ENCODE measurements at regions of chrX and their contacts with region 1.

Region 1: DNA sequence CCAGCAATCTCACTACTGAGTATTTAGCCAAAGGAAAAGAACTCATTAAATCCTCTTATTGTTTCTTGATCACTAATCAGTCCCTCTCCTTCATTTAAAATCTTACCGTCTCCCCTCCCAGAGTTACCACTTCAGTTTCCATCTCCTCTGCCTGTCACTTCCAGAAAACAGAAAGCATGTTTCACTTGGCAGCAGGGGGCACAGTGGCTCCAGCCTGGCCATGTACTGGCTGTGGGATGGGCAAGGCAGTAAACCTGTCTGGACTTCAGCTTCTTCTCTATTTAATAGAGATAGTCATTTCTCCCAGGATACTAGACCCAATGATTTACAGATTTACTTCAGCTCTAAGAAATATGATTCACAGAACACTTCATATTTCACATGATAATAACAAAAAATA is 63.2 kb downstream of the CD40LG start:
- DNase-seq: peak; percentile 56
- H3K4me3 Mint-ChIP-seq: no peak overlapping the region
- H3K27ac Mint-ChIP-seq: no peak overlapping the region
- H3K4me1 Mint-ChIP-seq: no peaks in the 10 kb centered on the region
- H3K27me3 Mint-ChIP-seq: peaks cover 14% of the 10 kb centered on the region
- CTCF ChIP-seq: peak; percentile 36

Region 2: DNA sequence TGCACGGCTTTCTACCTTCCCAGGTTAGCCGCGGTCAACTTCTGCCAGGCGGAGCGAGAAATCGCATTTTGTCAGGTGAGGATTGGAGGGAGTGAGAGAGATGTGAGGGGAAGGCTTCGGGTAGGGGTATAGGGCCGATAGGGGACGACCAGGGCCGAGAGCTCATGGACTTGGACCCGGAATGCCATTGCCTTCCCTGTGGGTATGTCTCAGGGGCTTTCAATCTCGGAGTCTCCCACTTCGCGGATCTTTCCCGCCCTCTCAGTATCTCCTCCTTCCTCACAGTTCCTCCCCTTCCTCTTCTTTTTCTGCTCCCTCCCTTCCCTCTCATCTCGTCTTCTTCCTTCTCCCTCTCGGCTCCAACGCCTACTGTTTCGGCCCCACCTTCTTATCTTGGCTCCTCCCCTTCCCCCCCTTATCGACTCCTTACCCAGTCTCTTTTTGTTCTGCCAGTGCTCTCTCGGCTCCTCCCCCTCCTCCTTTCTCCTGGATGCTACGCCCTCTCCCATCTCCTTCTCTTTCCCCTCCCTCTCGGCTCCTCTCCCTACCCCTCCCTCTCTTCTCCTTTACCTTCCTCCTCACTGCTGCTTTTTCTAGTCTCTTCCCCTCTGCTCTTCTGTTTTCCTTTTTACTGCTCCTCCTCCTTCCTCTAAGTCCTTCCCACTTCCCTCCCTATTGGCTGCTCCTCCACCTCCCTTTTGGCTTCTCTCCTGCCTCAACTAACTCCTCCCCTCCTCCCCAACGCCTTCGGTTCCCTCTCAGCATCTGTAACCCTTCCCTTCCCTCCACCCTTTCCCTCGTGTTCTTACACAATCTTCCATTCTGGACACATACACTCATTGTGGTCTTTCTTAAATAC is 198.8 kb after region 1 on chrX:
- CTCF ChIA-PET with region 1: interaction called, 12 read pairs
- POLR2A ChIA-PET with region 1: interaction called, 3 read pairs
- intact Hi-C with region 1: no loop called
- DNase-seq: peak; percentile 93
- H3K4me3 Mint-ChIP-seq: peak overlapping the region; percentile 87
- H3K27ac Mint-ChIP-seq: peak overlapping the region; percentile 65
- H3K4me1 Mint-ChIP-seq: peaks cover 6% of the 10 kb centered on the region
- H3K27me3 Mint-ChIP-seq: no peaks in the 10 kb centered on the region
- CTCF ChIP-seq: no peak

Region 3: DNA sequence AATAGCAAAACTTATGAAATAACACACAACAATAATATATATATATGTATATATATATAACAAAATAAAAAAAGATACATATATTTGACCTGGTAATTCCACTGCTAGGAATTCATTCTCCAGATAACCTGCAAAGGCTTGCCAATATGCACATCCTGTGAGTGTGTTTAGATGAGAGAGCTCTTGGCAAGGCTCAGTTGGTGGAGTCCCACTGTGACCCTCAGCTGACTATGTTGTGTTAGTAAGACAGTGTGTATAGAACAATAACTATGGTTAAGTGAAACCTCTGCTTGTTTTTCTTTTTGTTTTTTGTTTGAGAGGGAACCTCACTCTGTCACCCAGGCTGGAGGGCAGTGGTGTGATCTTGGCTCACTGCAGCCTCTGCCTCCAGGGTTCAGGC is 208.9 kb after region 1 on chrX:
- CTCF ChIA-PET with region 1: interaction called, 19 read pairs
- POLR2A ChIA-PET with region 1: no interaction called
- intact Hi-C with region 1: loop called (anchors 1 kb)
- DNase-seq: no peak
- H3K4me3 Mint-ChIP-seq: no peak overlapping the region
- H3K27ac Mint-ChIP-seq: no peak overlapping the region
- H3K4me1 Mint-ChIP-seq: no peaks in the 10 kb centered on the region
- H3K27me3 Mint-ChIP-seq: no peaks in the 10 kb centered on the region
- CTCF ChIP-seq: no peak